ENCODE measurements at regions of chr1 and their contacts with region 1.

Region 1: GRCh38 chr1:24415334-24415909 is at the start of gene NIPAL3:
- DNase-seq: peak; percentile 97
- H3K4me3 Mint-ChIP-seq: peak within 1 kb of the TSS; percentile 97
- H3K27ac Mint-ChIP-seq: peak within 1 kb of the TSS; percentile 78
- H3K4me1 Mint-ChIP-seq: peaks cover 51% of the 10 kb centered on the region
- H3K27me3 Mint-ChIP-seq: no peaks in the 10 kb centered on the region
- total RNA-seq, gene NIPAL3: 22.7 and 23.5 TPM in 2 replicates

Region 2: GRCh38 chr1:24391882-24392603 is 23.4 kb before region 1 on chr1:
- intact Hi-C with region 1: loop called (anchors 1 kb)
- DNase-seq: peak; percentile 47
- H3K4me3 Mint-ChIP-seq: peak overlapping the region; percentile 80
- H3K27ac Mint-ChIP-seq: peak overlapping the region; percentile 79
- H3K4me1 Mint-ChIP-seq: peaks cover 30% of the 10 kb centered on the region
- H3K27me3 Mint-ChIP-seq: peaks cover 4% of the 10 kb centered on the region

Region 3: DNA sequence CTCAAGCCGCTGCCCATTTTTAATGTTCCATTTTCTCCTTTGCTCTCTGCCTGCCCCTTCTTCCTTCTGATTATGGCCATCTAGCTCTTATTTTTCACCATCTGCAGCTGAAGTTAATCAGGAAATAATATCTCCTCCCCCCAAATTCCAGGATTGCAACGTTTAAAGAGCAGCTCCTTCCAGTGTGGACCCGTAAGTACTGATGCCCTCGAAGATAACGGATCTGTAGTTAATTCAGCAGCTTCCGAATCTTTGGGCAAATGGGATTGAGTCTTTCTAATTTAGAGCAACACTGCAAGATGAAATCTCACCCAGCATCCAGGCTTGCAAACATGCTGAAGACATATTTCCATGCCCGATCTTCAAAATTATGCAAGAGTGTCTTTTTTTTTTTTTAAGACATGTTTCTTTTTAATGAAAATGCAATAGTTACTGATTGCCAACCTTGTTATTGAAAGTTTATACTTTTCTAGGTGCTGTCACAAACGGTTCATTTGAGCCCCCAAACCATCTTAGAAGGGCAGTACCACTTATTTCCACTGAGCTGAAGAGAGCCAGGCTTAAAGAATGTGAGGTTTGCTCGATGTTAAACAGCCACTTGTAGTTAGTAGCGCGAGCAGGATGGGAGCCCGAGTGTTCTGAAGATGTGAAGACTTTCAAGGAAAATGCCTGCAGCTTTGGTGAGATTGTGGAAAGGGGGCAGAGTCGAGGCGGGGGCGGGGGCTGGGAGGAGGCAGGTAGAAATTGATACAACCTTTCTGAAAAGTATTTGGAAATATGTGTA is 76.3 kb after region 1 on chr1:
- intact Hi-C with region 1: loop called (anchors 2 kb)
- DNase-seq: no peak
- H3K4me3 Mint-ChIP-seq: no peak overlapping the region
- H3K27ac Mint-ChIP-seq: no peak overlapping the region
- H3K4me1 Mint-ChIP-seq: peaks cover 21% of the 10 kb centered on the region
- H3K27me3 Mint-ChIP-seq: peaks cover 1% of the 10 kb centered on the region

Region 4: GRCh38 chr1:24526940-24527542 is 111.6 kb after region 1 on chr1:
- intact Hi-C with region 1: loop called (anchors 1 kb)
- DNase-seq: no peak
- H3K4me3 Mint-ChIP-seq: no peak overlapping the region
- H3K27ac Mint-ChIP-seq: no peak overlapping the region
- H3K4me1 Mint-ChIP-seq: peaks cover 18% of the 10 kb centered on the region
- H3K27me3 Mint-ChIP-seq: no peaks in the 10 kb centered on the region

Region 5: DNA sequence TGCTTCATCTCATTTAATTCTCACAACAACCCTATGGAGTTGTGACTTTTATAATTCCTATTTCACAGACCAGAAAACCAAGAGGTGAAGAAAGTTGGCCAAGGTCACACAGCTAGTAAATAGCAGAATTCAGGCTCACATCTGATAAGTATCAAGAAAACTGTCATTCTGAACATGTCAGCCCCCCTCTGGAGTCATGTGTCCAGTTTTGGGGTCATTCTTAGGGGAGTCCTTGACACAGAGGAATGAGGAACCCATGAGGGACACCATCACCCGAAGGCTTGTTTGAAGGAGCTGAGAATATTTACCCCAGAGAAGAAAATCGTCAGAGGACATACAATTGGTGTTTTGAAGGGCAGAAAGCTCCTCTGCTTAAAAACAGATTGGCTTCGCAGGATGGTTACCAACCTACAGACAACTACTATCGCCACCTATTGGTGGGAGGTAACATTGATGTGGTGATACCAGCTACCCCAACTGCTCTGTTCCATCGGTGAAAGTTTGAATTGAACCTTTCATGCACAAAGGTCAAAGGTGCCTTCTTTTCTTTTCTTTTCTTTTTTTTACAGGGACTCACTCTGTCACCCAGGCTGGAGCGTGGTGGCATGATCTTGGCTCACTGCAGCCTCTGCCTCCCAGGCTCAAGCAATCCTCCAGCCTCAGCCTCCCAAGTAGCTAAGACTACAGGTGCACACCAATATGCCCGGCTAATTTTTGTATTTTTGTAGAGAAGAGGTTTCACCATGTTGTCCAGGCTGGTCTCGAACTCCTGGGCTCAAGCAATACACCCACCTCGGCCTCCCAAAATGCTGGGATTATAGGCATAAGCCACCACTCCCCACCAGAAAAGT is 171.8 kb after region 1 on chr1:
- intact Hi-C with region 1: loop called (anchors 1 kb)
- DNase-seq: peak; percentile 53
- H3K4me3 Mint-ChIP-seq: no peak overlapping the region
- H3K27ac Mint-ChIP-seq: no peak overlapping the region
- H3K4me1 Mint-ChIP-seq: peaks cover 9% of the 10 kb centered on the region
- H3K27me3 Mint-ChIP-seq: peaks cover 17% of the 10 kb centered on the region

Region 6: DNA sequence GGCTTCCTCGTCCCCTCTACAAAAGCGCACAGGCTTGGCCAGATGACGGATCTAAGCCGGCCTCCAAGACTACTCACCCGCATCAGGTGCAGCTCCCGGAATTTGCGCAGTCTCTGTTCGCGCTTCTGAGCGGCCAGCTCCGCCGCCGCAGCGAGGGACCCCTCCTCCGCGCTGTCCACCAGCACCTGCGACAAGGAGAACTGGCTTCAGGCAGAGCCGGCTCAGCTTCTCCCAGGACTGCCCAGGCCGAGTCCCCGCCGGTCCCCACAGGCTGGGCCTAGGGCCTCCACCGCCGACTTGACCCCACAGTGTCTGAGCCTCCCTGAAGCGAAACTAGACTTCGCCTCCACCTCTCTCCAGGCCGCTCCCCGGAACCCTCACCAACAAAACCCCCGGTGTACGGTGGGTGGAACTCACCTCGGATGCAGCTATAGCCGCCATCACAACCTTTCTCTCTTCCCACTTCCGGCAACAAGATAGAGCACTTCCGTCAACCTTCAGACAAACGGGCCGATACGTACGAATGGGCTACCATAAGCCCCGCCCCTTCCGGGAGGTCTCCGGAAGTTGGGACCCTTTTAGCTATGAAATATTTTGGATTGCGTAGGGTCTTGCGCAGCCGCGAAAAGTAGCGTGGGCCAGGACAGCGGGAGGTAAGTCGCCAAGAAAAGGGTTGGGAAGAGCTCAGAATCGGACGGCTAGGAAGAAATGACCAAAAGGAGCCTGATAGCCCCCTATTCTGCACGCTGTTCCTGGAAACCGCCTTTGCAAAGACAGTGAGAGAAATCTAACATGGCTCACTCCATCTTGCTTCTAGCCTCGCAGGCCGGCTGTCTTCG is 816.8 kb after region 1 on chr1 and contains the start of gene SYF2:
- intact Hi-C with region 1: loop called (anchors 1 kb)
- DNase-seq: peak; percentile 83
- H3K4me3 Mint-ChIP-seq: no peak within 1 kb of the TSS
- H3K27ac Mint-ChIP-seq: no peak within 1 kb of the TSS
- H3K4me1 Mint-ChIP-seq: peaks cover 32% of the 10 kb centered on the region
- H3K27me3 Mint-ChIP-seq: no peaks in the 10 kb centered on the region
- total RNA-seq, gene SYF2: 40.7 and 41.4 TPM in 2 replicates

Measured in activated T-helper 1 cell treated with anti-CD3 and anti-CD28 coated beads, Interleukin-12 subunit alpha, Interleukin-12 subunit beta, Interleukin-2, Interleukin-4 antibody, amounts not matched to agents 30 ng/mL and 10 ng/mL and 1 ng/mL, durations not matched to agents 14 hours and 24 hours and 36 hours (primary cell).